SK-N-SH (cell line): ENCODE measurements at regions of chr19 and their contacts with region 1.

Region 1: DNA sequence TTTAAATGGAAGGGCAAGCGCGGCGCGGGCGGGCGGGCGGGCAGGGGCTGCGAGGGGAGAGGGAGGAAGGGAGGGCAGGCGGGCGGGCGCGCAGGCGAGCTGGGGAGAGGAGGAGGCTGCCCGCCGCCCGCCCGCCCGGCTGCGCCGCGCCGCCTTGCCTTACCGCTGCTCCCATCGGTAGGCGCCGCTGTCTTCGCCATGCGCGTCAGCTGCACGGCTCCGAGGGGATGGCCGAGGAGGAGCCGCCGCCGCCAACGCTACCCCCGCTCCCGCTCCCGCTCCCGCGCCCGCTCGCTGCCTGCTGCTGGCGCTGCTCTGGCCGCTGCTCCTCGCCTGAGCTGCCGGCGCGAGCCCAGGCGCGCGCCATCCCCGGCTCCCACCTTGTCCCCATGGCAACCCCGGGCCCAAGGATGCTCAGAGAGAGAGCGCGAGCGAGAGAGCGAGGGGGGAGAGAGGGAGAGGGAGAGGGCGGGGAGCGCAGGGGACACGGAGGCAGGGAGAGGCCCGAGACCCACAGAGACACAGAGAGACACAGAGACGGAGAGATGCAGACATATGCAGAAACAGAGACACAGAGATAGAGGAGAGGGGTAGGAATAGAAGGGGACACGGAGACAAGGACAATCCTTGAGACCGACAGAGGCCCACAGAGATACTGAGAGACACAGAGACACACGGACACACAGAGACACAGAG is 40.3 kb downstream of the DEDD2 start:
- DNase-seq: peak; percentile 91
- H3K4me3 ChIP-seq: peak overlapping the region; percentile 52 to 78
- H3K27ac ChIP-seq: peak overlapping the region in 1 of 2 experiments; percentile 41; a peak in 1 of 4 replicates
- H3K4me1 ChIP-seq: peaks cover 0 to 11% of the 10 kb centered on the region in 2 experiments; a peak in 1 of 4 replicates
- H3K27me3 ChIP-seq: peaks cover 37% of the 10 kb centered on the region
- CTCF ChIP-seq: peak; percentile 36
- EP300 ChIP-seq: no peak
- RAD21 ChIP-seq: no peak

Region 2: DNA sequence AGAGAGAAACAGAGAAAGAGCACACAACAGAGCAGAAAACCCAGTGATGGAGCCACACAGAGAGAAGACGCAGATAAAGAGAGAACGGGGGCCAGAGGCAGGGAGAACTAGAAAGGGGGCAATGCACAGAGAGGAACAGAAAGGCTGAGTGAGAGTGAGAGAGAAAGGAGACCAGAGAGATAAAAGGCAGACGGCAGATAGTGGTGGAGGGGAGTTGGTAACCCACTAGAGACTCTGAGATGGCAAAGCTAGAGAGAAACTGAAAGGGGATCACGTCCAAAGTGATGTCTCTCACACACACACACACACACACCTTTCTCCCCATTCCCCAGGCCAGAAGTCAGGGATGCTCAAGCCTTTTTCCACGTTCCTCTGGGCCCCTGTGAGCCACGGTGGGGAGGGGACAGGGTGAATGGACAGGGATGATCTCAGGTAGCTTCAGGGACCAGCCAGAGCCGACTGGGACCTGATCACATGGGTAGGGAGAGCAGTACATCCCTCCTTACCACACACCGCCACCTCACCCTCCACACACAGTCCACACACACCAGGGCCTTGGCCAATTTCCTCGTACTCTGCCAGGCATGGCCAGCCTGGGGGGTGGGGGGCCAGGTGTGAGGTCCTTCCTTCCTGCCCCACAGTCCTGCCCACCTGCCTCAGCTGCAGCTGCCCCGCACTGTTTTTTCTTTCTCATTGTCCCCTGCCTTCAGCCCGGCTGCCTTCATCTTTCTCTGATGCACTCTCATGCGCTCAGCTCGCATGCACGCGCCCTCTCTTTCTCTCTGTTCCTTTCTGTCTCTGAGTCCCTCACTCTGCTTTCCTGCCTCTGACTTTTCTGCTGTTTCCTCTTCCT is 22.4 kb before region 1 on chr19:
- CTCF ChIA-PET with region 1: interaction called, 14 read pairs
- POLR2A ChIA-PET with region 1: no interaction called
- DNase-seq: peak; percentile 41
- H3K4me3 ChIP-seq: no peak overlapping the region
- H3K27ac ChIP-seq: no peak overlapping the region
- H3K4me1 ChIP-seq: peaks cover 0 to 16% of the 10 kb centered on the region in 2 experiments; a peak in 1 of 4 replicates
- H3K27me3 ChIP-seq: peaks cover 38% of the 10 kb centered on the region
- CTCF ChIP-seq: no peak
- EP300 ChIP-seq: no peak
- RAD21 ChIP-seq: no peak

Region 3: DNA sequence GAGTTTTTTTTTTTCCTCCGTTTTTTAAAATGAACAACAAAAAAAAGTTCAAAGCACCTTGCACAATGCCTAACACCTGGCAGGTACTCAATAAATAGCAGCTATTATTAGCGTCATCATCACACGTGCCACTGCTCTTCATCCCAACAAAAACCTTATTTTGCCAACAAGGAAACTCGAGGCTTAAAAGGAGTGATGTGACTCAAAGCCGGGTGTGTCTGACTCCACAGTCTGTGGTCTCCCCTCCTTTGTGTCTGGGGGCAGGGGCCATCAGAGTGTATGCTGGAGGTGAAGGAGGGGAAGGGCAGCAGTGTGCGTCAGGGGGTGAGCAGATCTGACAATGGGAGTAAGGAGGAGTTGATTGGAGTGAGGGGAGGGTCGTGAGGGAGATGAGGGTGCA is 10.8 kb before region 1 on chr19:
- CTCF ChIA-PET with region 1: interaction called, 14 read pairs
- POLR2A ChIA-PET with region 1: no interaction called
- DNase-seq: no peak
- H3K4me3 ChIP-seq: no peak overlapping the region
- H3K27ac ChIP-seq: no peak overlapping the region
- H3K4me1 ChIP-seq: no peaks in the 10 kb centered on the region; a peak in 1 of 4 replicates
- H3K27me3 ChIP-seq: peaks cover 2% of the 10 kb centered on the region; the same call in 1 of the 2 replicates
- CTCF ChIP-seq: no peak
- EP300 ChIP-seq: no peak
- RAD21 ChIP-seq: no peak